Ovary (tissue), 10 donors: ENCODE measurements at regions of chr10 and their contacts with region 1.

Region 1: DNA sequence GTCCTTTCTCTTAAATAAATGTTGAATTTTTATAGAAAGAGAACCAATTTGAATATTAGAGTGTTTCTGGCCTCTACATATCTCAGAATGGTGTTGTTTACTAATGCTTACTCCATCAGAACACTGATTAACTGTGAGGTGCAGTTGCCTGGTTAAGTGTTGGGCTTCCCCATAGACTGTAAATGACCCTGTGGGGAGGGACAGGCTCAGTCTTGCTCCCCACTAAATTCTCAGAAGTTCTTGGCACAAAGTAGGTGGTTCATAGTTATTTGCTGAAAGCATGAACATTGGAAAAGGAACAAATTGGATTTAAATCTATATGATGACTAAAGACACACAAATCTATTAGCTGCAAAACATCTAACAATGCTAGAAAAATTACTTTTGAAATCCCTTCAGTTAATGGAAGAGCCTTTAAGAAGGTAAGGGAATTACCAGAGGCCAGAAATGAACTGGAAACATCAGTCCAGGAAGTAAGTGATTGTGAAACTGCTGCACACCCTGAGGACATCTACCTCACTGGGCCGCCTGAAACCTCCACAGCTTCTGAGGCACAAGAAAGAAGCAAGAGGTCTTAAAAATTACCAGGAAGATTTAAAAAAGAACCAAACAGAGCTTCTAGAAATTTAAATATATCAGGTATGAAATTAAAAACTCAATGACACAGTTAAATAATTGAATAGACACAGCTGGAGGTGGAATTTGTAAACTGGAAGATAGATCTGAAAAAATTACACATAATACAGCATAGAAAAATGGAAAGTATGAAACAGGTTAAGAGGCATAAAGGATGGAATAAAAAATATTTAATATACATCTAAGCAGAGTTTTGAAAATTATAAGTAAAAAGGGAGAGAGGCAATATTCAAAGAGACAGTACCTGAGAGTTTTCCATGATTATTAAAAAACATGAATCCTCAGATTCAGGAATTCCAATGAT is 17.8 kb upstream of the COMTD1 start:
- DNase-seq: no peak
- H3K4me3 ChIP-seq: no peak overlapping the region
- H3K27ac ChIP-seq: no peak overlapping the region
- H3K4me1 ChIP-seq: no peaks in the 10 kb centered on the region
- H3K27me3 ChIP-seq: no peaks in the 10 kb centered on the region
- CTCF ChIP-seq: no peak
- EP300 ChIP-seq: no peak
- POLR2A ChIP-seq: no peak

Region 2: GRCh38 chr10:74718208-74718607 is 535.3 kb before region 1 on chr10:
- intact Hi-C with region 1: no loop called
- DNase-seq: no peak
- H3K4me3 ChIP-seq: no peak overlapping the region
- H3K27ac ChIP-seq: no peak overlapping the region
- H3K4me1 ChIP-seq: no peaks in the 10 kb centered on the region
- H3K27me3 ChIP-seq: no peaks in the 10 kb centered on the region
- CTCF ChIP-seq: no peak
- EP300 ChIP-seq: no peak
- POLR2A ChIP-seq: no peak

Region 3: DNA sequence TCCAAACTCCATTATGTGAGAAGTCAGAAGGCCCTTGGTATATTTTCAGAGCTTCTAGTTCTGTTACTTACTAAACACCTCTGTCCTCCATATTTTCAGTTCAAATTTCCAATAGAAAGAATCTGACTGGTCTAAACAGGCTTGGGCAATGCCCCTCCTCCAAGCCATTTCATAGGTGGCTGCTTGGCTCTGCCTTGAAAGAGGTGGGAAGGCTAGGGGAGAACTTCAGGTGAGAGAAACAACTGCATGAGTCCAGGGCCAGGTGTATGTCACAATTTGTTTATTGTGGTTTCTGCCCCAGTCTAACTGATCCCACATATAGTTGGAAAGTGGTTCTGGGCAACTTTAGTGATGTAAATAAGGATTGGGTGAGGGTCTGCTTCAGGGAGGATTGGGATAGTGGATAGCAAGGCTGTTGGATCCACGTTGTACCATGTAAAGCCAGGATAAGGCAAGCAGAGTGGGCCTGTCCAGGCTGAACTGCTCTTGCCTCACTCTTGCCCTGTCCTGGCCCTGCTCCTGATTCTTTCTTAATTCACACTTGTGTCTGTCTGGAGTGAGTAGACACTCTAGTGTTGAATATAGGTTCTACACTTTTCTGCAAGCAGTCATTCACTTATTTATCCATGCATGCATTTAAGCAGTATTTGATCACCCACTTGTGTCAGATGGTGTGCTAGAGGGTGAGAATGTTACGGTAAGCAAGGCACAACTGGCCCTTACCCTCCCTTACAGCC is 49.7 kb after region 1 on chr10:
- intact Hi-C with region 1: loop called in 1 of 4 experiments (anchors 2 kb)
- DNase-seq: no peak
- H3K4me3 ChIP-seq: no peak overlapping the region
- H3K27ac ChIP-seq: no peak overlapping the region
- H3K4me1 ChIP-seq: no peaks in the 10 kb centered on the region
- H3K27me3 ChIP-seq: no peaks in the 10 kb centered on the region
- CTCF ChIP-seq: no peak
- EP300 ChIP-seq: no peak
- POLR2A ChIP-seq: no peak

Region 4: DNA sequence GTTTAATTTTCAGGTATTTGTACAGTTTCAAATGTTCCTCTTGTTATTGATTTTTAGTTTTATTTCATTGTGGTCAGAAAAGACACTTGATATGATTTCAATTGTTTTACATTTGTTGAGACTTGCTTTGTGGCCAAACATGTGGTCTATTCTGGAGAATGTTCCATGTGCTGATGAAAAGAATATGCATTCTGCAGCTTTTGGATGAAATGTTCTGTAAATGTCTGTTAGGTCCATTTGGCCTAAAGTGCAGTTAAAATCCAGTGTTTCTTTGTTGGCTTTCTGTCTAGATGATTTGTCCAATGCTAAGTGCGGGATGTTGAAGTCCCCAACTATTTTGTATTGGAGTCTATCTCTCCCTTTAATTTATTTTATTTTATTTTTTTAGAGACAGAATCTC is 77.5 kb after region 1 on chr10:
- intact Hi-C with region 1: no loop called
- DNase-seq: no peak
- H3K4me3 ChIP-seq: no peak overlapping the region
- H3K27ac ChIP-seq: no peak overlapping the region
- H3K4me1 ChIP-seq: no peaks in the 10 kb centered on the region
- H3K27me3 ChIP-seq: no peaks in the 10 kb centered on the region
- CTCF ChIP-seq: no peak
- EP300 ChIP-seq: no peak
- POLR2A ChIP-seq: no peak